ENCODE measurements at regions of chr6 and their contacts with region 1.

Region 1: GRCh38 chr6:146289816-146290588 is 253.6 kb upstream of the RAB32 start:
- DNase-seq: peak; percentile 62 to 88 (median 85)
- H3K4me3 ChIP-seq: no peak overlapping the region
- H3K4me3 Mint-ChIP-seq: no peak overlapping the region
- H3K27ac ChIP-seq: no peak overlapping the region
- H3K27ac Mint-ChIP-seq: peak overlapping the region in 5 of 7 donors; percentile 14 to 71 (median 33)
- H3K4me1 ChIP-seq: peaks cover 10 to 11% of the 10 kb centered on the region in 2 donors
- H3K4me1 Mint-ChIP-seq: peaks cover 24% of the 10 kb centered on the region
- H3K27me3 ChIP-seq: no peaks in the 10 kb centered on the region
- H3K27me3 Mint-ChIP-seq: peaks cover 0 to 3% (median 1%) of the 10 kb centered on the region in 3 donors
- CTCF ChIP-seq: no peak

Region 2: GRCh38 chr6:146357578-146358430 is 67.8 kb after region 1 on chr6:
- intact Hi-C with region 1: loop called in 1 of 2 experiments (anchors 5 kb)
- DNase-seq: peak; percentile 73 to 88 (median 82)
- H3K4me3 ChIP-seq: peak overlapping the region; percentile 19 to 70 (median 67)
- H3K4me3 Mint-ChIP-seq: peak overlapping the region; percentile 47 to 86
- H3K27ac ChIP-seq: peak overlapping the region; percentile 36 to 88
- H3K27ac Mint-ChIP-seq: peak overlapping the region; percentile 84 to 98 (median 95)
- H3K4me1 ChIP-seq: peaks cover 33 to 36% of the 10 kb centered on the region in 2 donors
- H3K4me1 Mint-ChIP-seq: peaks cover 46% of the 10 kb centered on the region
- H3K27me3 ChIP-seq: no peaks in the 10 kb centered on the region
- H3K27me3 Mint-ChIP-seq: peaks cover 1 to 8% (median 3%) of the 10 kb centered on the region in 3 donors
- CTCF ChIP-seq: no peak

Region 3: DNA sequence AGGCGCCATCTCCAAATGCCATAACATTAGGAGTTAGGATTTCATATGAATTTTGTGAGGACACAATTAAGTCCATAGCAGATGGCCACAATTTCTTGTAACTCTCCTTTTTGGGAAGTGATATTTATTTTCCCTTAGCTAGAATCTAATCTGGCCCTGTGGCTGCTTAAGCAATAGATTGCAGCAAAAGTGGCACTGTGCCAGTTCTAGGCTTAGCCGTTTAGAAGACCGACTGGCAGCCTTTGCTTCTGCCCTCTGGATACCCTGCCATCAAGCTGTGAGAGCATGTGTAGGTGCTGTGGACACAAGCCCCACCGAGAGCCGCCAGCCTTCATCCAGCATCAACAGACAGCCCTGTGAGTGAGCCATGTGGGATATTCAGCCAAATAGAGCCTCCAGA is 292.9 kb after region 1 on chr6:
- intact Hi-C with region 1: no loop called
- DNase-seq: peak; percentile 73 to 89 (median 74)
- H3K4me3 ChIP-seq: peak overlapping the region in 1 of 3 experiments; percentile 48
- H3K4me3 Mint-ChIP-seq: peak overlapping the region in 1 of 2 donors; percentile 65
- H3K27ac ChIP-seq: peak overlapping the region in 1 of 2 donors; percentile 60
- H3K27ac Mint-ChIP-seq: peak overlapping the region in 5 of 7 donors; percentile 50 to 72 (median 70)
- H3K4me1 ChIP-seq: peaks cover 36 to 46% of the 10 kb centered on the region in 2 donors
- H3K4me1 Mint-ChIP-seq: peaks cover 35% of the 10 kb centered on the region
- H3K27me3 ChIP-seq: no peaks in the 10 kb centered on the region
- H3K27me3 Mint-ChIP-seq: no peaks in the 10 kb centered on the region
- CTCF ChIP-seq: no peak

Measured in CD14-positive monocyte (primary cell).